Activated CD4-positive, alpha-beta T cell treated with anti-CD3 and anti-CD28 coated beads, Interleukin-2, amount 10 ng/mL, durations not matched to agents 24 days and 14 days (primary cell): ENCODE measurements at regions of chr4 and their contacts with region 1.

Region 1: DNA sequence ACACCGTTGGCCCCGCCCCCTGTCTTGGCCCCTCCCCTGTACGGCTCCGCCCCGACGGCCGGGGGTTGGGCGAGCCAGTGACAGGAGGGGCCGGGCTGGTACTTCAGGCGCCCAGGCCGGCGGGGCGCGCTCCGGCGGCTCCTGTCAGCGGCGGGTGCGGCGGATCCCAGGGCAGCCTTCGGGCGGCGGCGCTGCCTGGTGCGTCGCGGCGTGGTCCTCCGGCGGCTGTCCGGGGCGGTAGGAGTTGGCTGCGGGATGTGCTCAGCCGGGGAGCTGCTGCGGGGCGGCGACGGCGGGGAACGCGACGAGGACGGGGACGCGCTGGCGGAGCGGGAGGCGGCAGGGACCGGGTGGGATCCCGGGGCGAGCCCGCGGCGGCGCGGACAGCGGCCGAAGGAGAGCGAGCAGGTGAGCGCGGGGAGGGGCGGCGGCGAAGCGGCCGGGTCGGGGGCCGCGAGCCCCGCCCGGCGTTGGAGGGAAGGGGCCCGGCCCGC is at the start of gene FAM241A:
- DNase-seq: peak; percentile 96
- H3K4me3 Mint-ChIP-seq: peak within 1 kb of the TSS; percentile 89
- H3K27ac Mint-ChIP-seq: peak within 1 kb of the TSS; percentile 95
- H3K4me1 Mint-ChIP-seq: peaks cover 45% of the 10 kb centered on the region
- H3K27me3 Mint-ChIP-seq: no peaks in the 10 kb centered on the region
- total RNA-seq, gene FAM241A: 6.2 and 6.7 TPM in 2 replicates

Region 2: DNA sequence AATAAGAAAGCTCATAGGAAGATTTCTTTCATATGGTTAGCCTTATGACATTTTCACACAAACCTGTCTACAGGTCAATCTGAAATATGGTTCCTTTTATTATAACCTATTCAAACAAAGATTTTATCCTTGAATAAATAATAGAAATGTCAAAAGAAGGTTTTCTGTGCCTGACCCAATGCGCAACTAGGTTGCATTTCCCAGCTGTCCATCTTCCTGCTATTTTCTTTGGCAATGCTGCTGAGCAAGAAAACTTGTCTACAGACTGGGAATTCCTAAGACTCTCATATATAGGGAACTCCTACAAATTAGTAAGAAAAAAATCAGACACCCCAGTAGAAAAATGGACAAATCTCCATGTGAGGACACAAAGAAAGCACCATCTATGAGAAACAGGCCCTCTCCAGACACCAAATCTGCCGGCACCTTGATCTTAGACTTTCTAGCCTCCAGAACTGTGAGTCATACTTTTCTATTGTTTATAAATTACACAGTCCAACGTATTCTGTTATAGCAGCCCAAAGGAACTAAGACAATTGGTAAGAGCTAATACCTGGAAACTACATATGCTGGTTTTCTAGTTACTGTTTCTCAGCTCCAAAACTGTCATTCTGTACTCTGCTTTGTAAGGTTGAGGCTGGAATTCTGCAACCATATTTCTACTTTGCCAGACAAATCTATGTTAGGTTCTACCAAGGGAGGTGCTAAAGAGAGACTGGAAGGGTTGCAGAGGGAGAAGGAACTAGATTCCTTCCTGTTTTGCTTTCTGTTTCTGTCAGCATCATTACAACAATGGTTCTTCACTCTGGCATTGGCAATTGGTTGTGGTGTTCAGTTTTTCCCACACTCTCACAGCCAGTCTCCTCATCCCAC is 36.0 kb before region 1 on chr4:
- intact Hi-C with region 1: loop called (anchors 5 kb)
- DNase-seq: peak; percentile 61
- H3K4me3 Mint-ChIP-seq: peak overlapping the region; percentile 53
- H3K27ac Mint-ChIP-seq: peak overlapping the region; percentile 59
- H3K4me1 Mint-ChIP-seq: peaks cover 16% of the 10 kb centered on the region
- H3K27me3 Mint-ChIP-seq: no peaks in the 10 kb centered on the region

Region 3: GRCh38 chr4:112127803-112128202 is 17.6 kb before region 1 on chr4:
- intact Hi-C with region 1: loop called (anchors 2 kb)
- DNase-seq: no peak
- H3K4me3 Mint-ChIP-seq: no peak overlapping the region
- H3K27ac Mint-ChIP-seq: no peak overlapping the region
- H3K4me1 Mint-ChIP-seq: peaks cover 12% of the 10 kb centered on the region
- H3K27me3 Mint-ChIP-seq: peaks cover 33% of the 10 kb centered on the region

Region 4: GRCh38 chr4:112199040-112199439 is 53.7 kb after region 1 on chr4:
- intact Hi-C with region 1: loop called (anchors 1 kb)
- DNase-seq: no peak
- H3K4me3 Mint-ChIP-seq: no peak overlapping the region
- H3K27ac Mint-ChIP-seq: no peak overlapping the region
- H3K4me1 Mint-ChIP-seq: peaks cover 17% of the 10 kb centered on the region
- H3K27me3 Mint-ChIP-seq: peaks cover 1% of the 10 kb centered on the region

Region 5: DNA sequence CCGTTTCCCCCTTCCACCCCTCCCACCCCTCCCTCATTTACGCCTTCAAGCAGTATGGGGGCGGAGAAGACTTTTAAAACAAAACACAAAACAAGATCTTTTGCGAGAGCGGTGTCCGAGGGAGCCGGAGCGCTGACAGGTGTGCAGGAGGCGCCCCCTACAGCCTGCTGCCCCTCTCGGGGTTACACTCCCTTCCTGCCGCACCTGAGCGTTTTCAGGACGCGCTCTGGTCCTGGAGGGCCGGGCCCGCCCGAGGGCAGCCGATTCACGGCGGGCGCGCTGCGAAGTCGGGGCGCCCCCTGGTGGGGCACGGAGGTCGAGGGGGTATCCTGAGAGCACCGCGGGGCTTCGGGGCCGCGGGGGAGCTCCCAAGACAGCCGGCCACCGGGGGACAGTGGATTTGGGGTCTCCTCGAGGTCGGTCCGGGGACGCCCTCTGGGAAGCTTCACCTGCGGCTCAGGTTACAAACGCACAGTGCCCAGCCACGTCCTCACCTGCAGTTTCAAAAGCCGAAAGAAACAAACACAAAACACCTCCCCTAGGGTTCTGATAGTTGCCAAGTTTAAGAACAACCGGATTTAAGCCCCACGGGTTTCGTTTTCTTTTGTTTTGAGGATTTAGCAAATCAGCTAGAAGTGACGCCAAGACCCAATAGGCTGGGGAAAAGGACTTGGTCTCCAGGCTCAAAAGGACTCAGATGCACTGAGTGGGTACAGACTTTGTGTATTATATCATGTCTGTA is 378.6 kb after region 1 on chr4:
- intact Hi-C with region 1: no loop called
- DNase-seq: peak; percentile 94
- H3K4me3 Mint-ChIP-seq: peak overlapping the region; percentile 88
- H3K27ac Mint-ChIP-seq: peak overlapping the region; percentile 38
- H3K4me1 Mint-ChIP-seq: peaks cover 30% of the 10 kb centered on the region
- H3K27me3 Mint-ChIP-seq: peaks cover 70% of the 10 kb centered on the region

Region 6: GRCh38 chr4:112636688-112637551 is 491.5 kb after region 1 on chr4 and contains the starts of genes LARP7 and ZGRF1:
- intact Hi-C with region 1: loop called (anchors 2 kb)
- DNase-seq: peak; percentile 99
- H3K4me3 Mint-ChIP-seq: no peak within 1 kb of the TSS
- H3K27ac Mint-ChIP-seq: no peak within 1 kb of the TSS
- H3K4me1 Mint-ChIP-seq: peaks cover 29% of the 10 kb centered on the region
- H3K27me3 Mint-ChIP-seq: no peaks in the 10 kb centered on the region
- total RNA-seq, gene LARP7: 47.6 and 48.5 TPM in 2 replicates
- total RNA-seq, gene ZGRF1: 32.4 and 37.0 TPM in 2 replicates